B cell (primary cell): ENCODE measurements at regions of chr9 and their contacts with region 1.

Region 1: DNA sequence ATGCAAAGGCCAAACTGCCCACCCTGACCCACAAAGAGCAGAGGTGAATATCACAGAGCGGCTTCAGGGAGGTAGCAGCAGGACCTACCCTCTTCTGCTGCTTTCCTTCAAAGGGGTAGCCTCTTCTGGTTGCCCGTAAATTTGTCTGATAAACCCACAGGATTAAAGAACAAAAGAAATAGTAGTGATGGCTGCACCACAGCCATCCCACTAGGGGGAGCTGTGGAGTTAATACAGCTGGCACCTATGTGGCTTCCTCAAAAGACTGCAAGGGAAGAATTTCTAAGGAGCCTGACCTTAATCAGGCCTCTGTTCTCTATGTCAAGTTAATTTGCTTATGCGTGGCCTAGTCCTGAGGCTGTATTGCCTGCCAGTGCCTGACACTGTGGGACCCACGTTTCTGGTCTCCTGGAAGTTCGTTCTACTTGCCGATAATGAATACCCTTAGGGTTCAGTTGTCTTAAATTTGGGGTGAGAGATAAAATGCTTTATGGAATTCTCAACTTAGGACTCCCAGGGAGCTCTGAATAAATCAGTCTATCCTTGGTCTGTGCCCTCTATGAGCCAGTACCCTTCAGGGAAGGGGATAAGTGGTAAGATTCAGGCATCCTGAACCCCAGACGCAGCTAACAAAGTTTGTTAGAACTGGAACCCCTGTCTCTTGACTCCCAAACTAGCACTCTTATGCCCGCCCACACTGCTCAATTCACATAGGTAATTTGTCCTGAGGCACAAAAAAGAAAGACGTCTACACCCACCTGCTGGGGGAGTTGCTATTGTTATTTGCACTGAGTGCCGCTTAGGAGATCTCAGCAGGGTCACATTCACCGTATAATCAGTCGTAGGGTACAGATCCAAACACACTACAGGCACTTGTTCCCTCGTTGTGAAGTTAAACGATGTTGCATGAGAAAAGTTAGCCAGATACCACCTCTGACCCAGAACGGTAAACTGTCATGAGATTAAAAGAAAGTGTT is 77.1 kb downstream of the SUSD1 start:
- DNase-seq: peak; percentile 86
- ATAC-seq: peak; percentile 94
- H3K4me3 ChIP-seq: no peak overlapping the region
- H3K4me3 Mint-ChIP-seq: no peak overlapping the region
- H3K27ac ChIP-seq: no peak overlapping the region
- H3K27ac Mint-ChIP-seq: peak overlapping the region; percentile 16
- H3K4me1 ChIP-seq: peaks cover 10 to 13% of the 10 kb centered on the region in 2 donors
- H3K4me1 Mint-ChIP-seq: peaks cover 37% of the 10 kb centered on the region
- H3K27me3 ChIP-seq: no peaks in the 10 kb centered on the region
- H3K27me3 Mint-ChIP-seq: no peaks in the 10 kb centered on the region
- CTCF ChIP-seq: peak; percentile 94

Region 2: GRCh38 chr9:111759762-111760639 is 338.0 kb before region 1 on chr9:
- CTCF ChIA-PET with region 1: interaction called, 23 read pairs
- POLR2A ChIA-PET with region 1: no interaction called
- intact Hi-C with region 1: no loop called
- DNase-seq: peak; percentile 82
- ATAC-seq: peak; percentile 82
- H3K4me3 ChIP-seq: no peak overlapping the region
- H3K4me3 Mint-ChIP-seq: no peak overlapping the region
- H3K27ac ChIP-seq: no peak overlapping the region
- H3K27ac Mint-ChIP-seq: no peak overlapping the region
- H3K4me1 ChIP-seq: peaks cover 0 to 3% of the 10 kb centered on the region in 2 donors
- H3K4me1 Mint-ChIP-seq: peaks cover 4% of the 10 kb centered on the region
- H3K27me3 ChIP-seq: no peaks in the 10 kb centered on the region
- H3K27me3 Mint-ChIP-seq: no peaks in the 10 kb centered on the region
- CTCF ChIP-seq: peak; percentile 91

Region 3: GRCh38 chr9:112086627-112087026 is 11.4 kb before region 1 on chr9:
- CTCF ChIA-PET with region 1: interaction called, 22 read pairs
- POLR2A ChIA-PET with region 1: no interaction called
- intact Hi-C with region 1: no loop called
- DNase-seq: peak; percentile 36
- ATAC-seq: no peak
- H3K4me3 ChIP-seq: no peak overlapping the region
- H3K4me3 Mint-ChIP-seq: no peak overlapping the region
- H3K27ac ChIP-seq: no peak overlapping the region
- H3K27ac Mint-ChIP-seq: no peak overlapping the region
- H3K4me1 ChIP-seq: no peaks in the 10 kb centered on the region
- H3K4me1 Mint-ChIP-seq: no peaks in the 10 kb centered on the region
- H3K27me3 ChIP-seq: no peaks in the 10 kb centered on the region
- H3K27me3 Mint-ChIP-seq: no peaks in the 10 kb centered on the region
- CTCF ChIP-seq: peak; percentile 68

Region 4: GRCh38 chr9:112112941-112113681 is 15.1 kb after region 1 on chr9:
- CTCF ChIA-PET with region 1: interaction called, 22 read pairs
- POLR2A ChIA-PET with region 1: no interaction called
- intact Hi-C with region 1: no loop called
- DNase-seq: no peak
- ATAC-seq: no peak
- H3K4me3 ChIP-seq: no peak overlapping the region
- H3K4me3 Mint-ChIP-seq: no peak overlapping the region
- H3K27ac ChIP-seq: no peak overlapping the region
- H3K27ac Mint-ChIP-seq: no peak overlapping the region
- H3K4me1 ChIP-seq: peaks cover 26% of the 10 kb centered on the region in 2 donors
- H3K4me1 Mint-ChIP-seq: peaks cover 45% of the 10 kb centered on the region
- H3K27me3 ChIP-seq: no peaks in the 10 kb centered on the region
- H3K27me3 Mint-ChIP-seq: no peaks in the 10 kb centered on the region
- CTCF ChIP-seq: no peak

Region 5: GRCh38 chr9:112308588-112308987 is 210.6 kb after region 1 on chr9:
- CTCF ChIA-PET with region 1: no interaction called
- POLR2A ChIA-PET with region 1: no interaction called
- intact Hi-C with region 1: no loop called
- DNase-seq: no peak
- ATAC-seq: no peak
- H3K4me3 ChIP-seq: no peak overlapping the region
- H3K4me3 Mint-ChIP-seq: no peak overlapping the region
- H3K27ac ChIP-seq: no peak overlapping the region
- H3K27ac Mint-ChIP-seq: no peak overlapping the region
- H3K4me1 ChIP-seq: peaks cover 0 to 3% of the 10 kb centered on the region in 2 donors
- H3K4me1 Mint-ChIP-seq: peaks cover 34% of the 10 kb centered on the region
- H3K27me3 ChIP-seq: no peaks in the 10 kb centered on the region
- H3K27me3 Mint-ChIP-seq: no peaks in the 10 kb centered on the region
- CTCF ChIP-seq: no peak